Panc1 (cell line): ENCODE measurements at regions of chr19 and their contacts with region 1.

Region 1: GRCh38 chr19:19033426-19034203 is at the starts of genes ARMC6 and SUGP2:
- DNase-seq: peak; percentile 66
- ATAC-seq: peak; percentile 93
- H3K4me3 ChIP-seq: peak within 1 kb of the TSS; percentile 86 to 91
- H3K27ac ChIP-seq: peak within 1 kb of the TSS; percentile 99
- H3K4me1 ChIP-seq: peaks cover 6% of the 10 kb centered on the region; the same call in 1 of the 2 replicates
- H3K27me3 ChIP-seq: no peaks in the 10 kb centered on the region
- CTCF ChIP-seq: no peak
- total RNA-seq, gene ARMC6: 51.4 TPM
- total RNA-seq, gene SUGP2: 112 TPM

Region 2: GRCh38 chr19:19126102-19126501 is 92.5 kb after region 1 on chr19:
- CTCF ChIA-PET with region 1: no interaction called
- POLR2A ChIA-PET with region 1: interaction called, 18 read pairs
- in situ Hi-C with region 1: no loop called
- intact Hi-C with region 1: no loop called
- DNase-seq: no peak
- ATAC-seq: no peak
- H3K4me3 ChIP-seq: no peak overlapping the region
- H3K27ac ChIP-seq: no peak overlapping the region
- H3K4me1 ChIP-seq: no peaks in the 10 kb centered on the region
- H3K27me3 ChIP-seq: no peaks in the 10 kb centered on the region
- CTCF ChIP-seq: no peak

Region 3: DNA sequence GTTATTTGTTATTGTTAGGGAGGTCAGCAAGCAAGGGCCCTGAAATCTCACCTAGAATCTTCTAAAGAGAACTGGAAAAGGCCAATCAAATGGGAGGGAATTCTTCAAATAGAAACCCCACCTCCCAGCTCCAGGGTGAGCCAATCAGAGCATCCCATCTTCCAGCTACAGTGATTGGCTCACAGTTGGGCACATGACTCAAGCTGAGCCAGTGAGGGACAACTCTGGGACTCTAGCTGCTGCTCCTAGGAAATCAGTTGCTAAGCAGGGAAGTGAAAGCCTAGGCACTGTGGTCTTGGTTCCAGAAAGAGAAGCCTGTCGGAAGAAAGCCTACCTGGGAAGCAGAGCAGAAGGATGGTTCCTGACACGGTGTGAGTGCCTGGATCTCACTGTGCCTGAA is 226.1 kb after region 1 on chr19:
- CTCF ChIA-PET with region 1: no interaction called
- POLR2A ChIA-PET with region 1: no interaction called
- in situ Hi-C with region 1: no loop called
- intact Hi-C with region 1: no loop called
- DNase-seq: no peak
- ATAC-seq: 0 out of 2 replicates have a peak, but pooled peaks have one; percentile 59
- H3K4me3 ChIP-seq: no peak overlapping the region
- H3K27ac ChIP-seq: no peak overlapping the region
- H3K4me1 ChIP-seq: no peaks in the 10 kb centered on the region
- H3K27me3 ChIP-seq: no peaks in the 10 kb centered on the region; the same call in 1 of the 2 replicates
- CTCF ChIP-seq: no peak